Activated naive CD4-positive, alpha-beta T cell treated with anti-CD3 and anti-CD28 coated beads, Interleukin-2, amount 10 ng/mL, durations not matched to agents 7 days and 5 days (primary cell): ENCODE measurements at regions of chr16 and their contacts with region 1.

Region 1: GRCh38 chr16:30429678-30430427 is at the start of gene DCTPP1:
- DNase-seq: peak; percentile 98
- H3K4me3 Mint-ChIP-seq: no peak within 1 kb of the TSS
- H3K27ac Mint-ChIP-seq: no peak within 1 kb of the TSS
- H3K4me1 Mint-ChIP-seq: peaks cover 26% of the 10 kb centered on the region
- H3K27me3 Mint-ChIP-seq: no peaks in the 10 kb centered on the region

Region 2: DNA sequence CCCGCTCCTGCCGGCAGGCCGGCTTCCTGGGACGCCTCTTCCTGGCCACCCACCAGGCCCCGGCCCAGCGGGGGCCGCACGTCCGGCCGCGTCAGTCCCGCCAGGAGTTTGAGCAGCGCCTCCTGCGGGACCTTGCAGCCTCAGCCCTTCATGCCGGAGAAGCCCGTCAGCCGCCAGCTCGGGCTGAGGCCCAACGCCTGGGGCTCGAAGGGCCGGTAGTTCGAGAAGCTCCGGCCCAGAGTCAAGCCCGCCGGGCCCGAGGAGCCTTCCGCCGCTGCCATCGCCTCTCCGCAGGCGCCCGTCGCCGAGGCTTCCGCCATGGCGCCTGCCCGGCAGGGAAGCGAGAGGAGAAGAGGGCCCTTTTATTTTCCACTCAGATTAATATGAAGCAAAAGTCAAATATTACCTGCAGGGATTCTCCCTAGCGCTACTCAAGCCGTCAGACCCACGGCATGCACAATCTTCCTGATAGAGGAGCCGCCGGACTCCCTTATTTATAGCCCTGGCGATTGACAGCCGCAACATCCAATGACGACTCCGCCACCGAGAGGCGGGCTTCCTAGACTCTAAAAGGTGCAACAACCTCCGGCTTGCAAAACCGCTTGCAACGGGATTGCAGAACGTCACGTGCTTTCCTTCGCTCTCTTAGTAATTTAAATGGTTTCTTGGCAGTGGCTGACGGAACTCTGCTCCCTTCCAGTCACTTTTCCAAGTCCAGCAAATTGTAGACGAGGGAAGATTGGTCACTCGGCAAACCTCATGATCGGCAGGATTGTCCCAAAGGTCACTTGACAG is 15.8 kb after region 1 on chr16 and contains the start of gene SEPHS2:
- CTCF ChIA-PET with region 1: interaction called, 12 read pairs
- DNase-seq: peak; percentile 99
- H3K4me3 Mint-ChIP-seq: peak within 1 kb of the TSS; percentile 95
- H3K27ac Mint-ChIP-seq: peak within 1 kb of the TSS; percentile 97
- H3K4me1 Mint-ChIP-seq: peaks cover 56% of the 10 kb centered on the region
- H3K27me3 Mint-ChIP-seq: no peaks in the 10 kb centered on the region

Region 3: GRCh38 chr16:30482366-30482765 is 52.5 kb after region 1 on chr16:
- CTCF ChIA-PET with region 1: interaction called, 12 read pairs
- DNase-seq: no peak
- H3K4me3 Mint-ChIP-seq: no peak overlapping the region
- H3K27ac Mint-ChIP-seq: peak overlapping the region; percentile 75
- H3K4me1 Mint-ChIP-seq: peaks cover 73% of the 10 kb centered on the region
- H3K27me3 Mint-ChIP-seq: no peaks in the 10 kb centered on the region

Region 4: GRCh38 chr16:30534368-30535105 is 104.7 kb after region 1 on chr16 and contains the start of gene ZNF747:
- CTCF ChIA-PET with region 1: interaction called, 27 read pairs
- DNase-seq: peak; percentile 94
- H3K4me3 Mint-ChIP-seq: peak within 1 kb of the TSS; percentile 86
- H3K27ac Mint-ChIP-seq: peak within 1 kb of the TSS; percentile 97
- H3K4me1 Mint-ChIP-seq: peaks cover 51% of the 10 kb centered on the region
- H3K27me3 Mint-ChIP-seq: no peaks in the 10 kb centered on the region

Region 5: GRCh38 chr16:30615358-30616091 is 185.7 kb after region 1 on chr16:
- CTCF ChIA-PET with region 1: interaction called, 15 read pairs
- DNase-seq: peak; percentile 87
- H3K4me3 Mint-ChIP-seq: no peak overlapping the region
- H3K27ac Mint-ChIP-seq: no peak overlapping the region
- H3K4me1 Mint-ChIP-seq: peaks cover 15% of the 10 kb centered on the region
- H3K27me3 Mint-ChIP-seq: peaks cover 12% of the 10 kb centered on the region